ENCODE measurements at regions of chr14 and their contacts with region 1.

Region 1: GRCh38 chr14:51651388-51652167 is at the start of gene FRMD6:
- DNase-seq: peak; percentile 86
- ATAC-seq: peak; percentile 71
- H3K4me3 ChIP-seq: peak within 1 kb of the TSS; percentile 86
- H3K27ac ChIP-seq: peak within 1 kb of the TSS; percentile 83
- H3K4me1 ChIP-seq: peaks cover 48% of the 10 kb centered on the region
- H3K27me3 ChIP-seq: no peaks in the 10 kb centered on the region
- CTCF ChIP-seq: peak; percentile 86
- total RNA-seq, gene FRMD6: 88.3 and 103 TPM in 2 replicates

Region 2: DNA sequence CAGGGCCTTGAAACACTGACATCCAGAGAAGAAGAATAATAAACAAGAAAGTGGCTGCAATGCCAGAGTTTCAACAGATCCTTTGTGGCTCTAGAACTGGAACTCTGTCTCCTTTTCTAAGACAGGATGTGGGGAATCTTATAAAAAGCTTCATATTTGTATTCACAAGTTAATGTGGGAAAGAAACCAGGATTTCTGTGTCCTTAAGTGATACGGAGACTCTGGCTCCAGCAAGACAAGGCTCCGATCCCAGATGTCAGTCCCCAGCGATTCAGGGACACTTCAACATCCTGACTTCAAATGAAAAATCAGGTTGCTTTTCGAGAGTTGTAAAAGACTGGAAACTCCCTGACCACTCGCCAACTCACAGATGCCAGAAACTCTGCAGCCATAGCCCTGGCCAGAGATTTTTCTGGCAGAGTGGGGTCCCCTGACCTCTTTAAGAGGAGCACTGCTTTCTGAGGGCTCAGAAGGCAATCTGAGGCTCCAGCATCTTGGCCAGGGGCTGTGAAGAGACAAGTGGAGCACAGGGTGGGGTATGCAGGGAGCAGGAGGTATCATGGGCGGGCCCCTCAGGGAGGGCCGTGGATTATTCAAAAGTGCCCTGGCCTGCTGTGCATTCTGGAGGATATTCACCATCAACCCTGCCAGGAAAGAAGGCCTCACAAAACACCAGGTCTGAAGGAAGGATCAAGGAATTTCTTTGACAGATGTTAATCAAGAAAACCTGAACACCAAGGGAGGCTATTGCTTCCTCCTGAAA is 358.2 kb before region 1 on chr14:
- CTCF ChIA-PET with region 1: interaction called, 3 read pairs
- POLR2A ChIA-PET with region 1: interaction called, 13 read pairs
- intact Hi-C with region 1: no loop called
- DNase-seq: no peak
- ATAC-seq: no peak
- H3K4me3 ChIP-seq: no peak overlapping the region
- H3K27ac ChIP-seq: no peak overlapping the region
- H3K4me1 ChIP-seq: peaks cover 12% of the 10 kb centered on the region
- H3K27me3 ChIP-seq: no peaks in the 10 kb centered on the region
- CTCF ChIP-seq: no peak

Region 3: DNA sequence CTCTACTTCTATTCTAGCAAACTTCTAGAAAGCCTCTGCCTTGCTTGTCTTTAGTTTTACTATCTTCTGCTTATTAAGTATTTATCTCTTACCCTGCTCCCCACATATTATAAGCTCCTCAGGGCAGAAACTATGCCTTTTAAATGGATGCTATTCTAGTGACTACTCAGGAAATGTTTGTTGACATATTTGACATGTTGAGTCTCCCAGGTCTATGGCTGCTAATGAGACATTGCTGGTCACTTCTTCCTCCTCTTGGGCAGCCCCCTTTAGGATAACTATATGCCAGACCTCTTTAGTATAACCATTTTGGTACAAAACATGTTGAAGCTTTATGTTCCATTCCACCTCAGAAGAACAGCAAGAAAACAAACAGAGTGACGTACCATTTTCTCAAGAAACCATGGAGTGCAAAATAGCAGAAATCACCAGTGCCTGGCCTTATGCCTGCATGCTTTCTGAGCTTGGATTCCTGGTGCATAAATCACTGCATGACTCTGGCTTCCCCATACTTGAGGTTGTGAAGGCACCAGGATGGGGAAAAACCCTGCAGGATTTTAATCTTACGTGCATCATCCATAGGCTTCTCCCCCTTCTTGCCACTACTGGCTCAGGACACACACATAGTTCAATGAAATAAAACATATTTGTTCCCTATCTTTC is 208.9 kb before region 1 on chr14:
- CTCF ChIA-PET with region 1: interaction called, 3 read pairs
- POLR2A ChIA-PET with region 1: interaction called, 19 read pairs
- intact Hi-C with region 1: loop called (anchors 2 kb)
- DNase-seq: peak; percentile 97
- ATAC-seq: peak; percentile 91
- H3K4me3 ChIP-seq: peak overlapping the region; percentile 35
- H3K27ac ChIP-seq: peak overlapping the region; percentile 95
- H3K4me1 ChIP-seq: peaks cover 45% of the 10 kb centered on the region
- H3K27me3 ChIP-seq: no peaks in the 10 kb centered on the region
- CTCF ChIP-seq: no peak

Region 4: GRCh38 chr14:51539571-51540037 is 112.0 kb before region 1 on chr14:
- CTCF ChIA-PET with region 1: interaction called, 11 read pairs
- POLR2A ChIA-PET with region 1: interaction called, 10 read pairs
- intact Hi-C with region 1: loop called (anchors 1 kb)
- DNase-seq: peak; percentile 99
- ATAC-seq: peak; percentile 60
- H3K4me3 ChIP-seq: peak overlapping the region; percentile 22; the same call in 1 of the 2 replicates
- H3K27ac ChIP-seq: peak overlapping the region; percentile 96
- H3K4me1 ChIP-seq: peaks cover 50% of the 10 kb centered on the region
- H3K27me3 ChIP-seq: no peaks in the 10 kb centered on the region
- CTCF ChIP-seq: no peak

Region 5: GRCh38 chr14:51581017-51581881 is 70.3 kb before region 1 on chr14:
- CTCF ChIA-PET with region 1: no interaction called
- POLR2A ChIA-PET with region 1: no interaction called
- intact Hi-C with region 1: loop called (anchors 2 kb)
- DNase-seq: peak; percentile 92
- ATAC-seq: peak; percentile 84
- H3K4me3 ChIP-seq: peak overlapping the region; percentile 1; the same call in 1 of the 2 replicates
- H3K27ac ChIP-seq: peak overlapping the region; percentile 82
- H3K4me1 ChIP-seq: peaks cover 60% of the 10 kb centered on the region
- H3K27me3 ChIP-seq: no peaks in the 10 kb centered on the region
- CTCF ChIP-seq: no peak

Region 6: DNA sequence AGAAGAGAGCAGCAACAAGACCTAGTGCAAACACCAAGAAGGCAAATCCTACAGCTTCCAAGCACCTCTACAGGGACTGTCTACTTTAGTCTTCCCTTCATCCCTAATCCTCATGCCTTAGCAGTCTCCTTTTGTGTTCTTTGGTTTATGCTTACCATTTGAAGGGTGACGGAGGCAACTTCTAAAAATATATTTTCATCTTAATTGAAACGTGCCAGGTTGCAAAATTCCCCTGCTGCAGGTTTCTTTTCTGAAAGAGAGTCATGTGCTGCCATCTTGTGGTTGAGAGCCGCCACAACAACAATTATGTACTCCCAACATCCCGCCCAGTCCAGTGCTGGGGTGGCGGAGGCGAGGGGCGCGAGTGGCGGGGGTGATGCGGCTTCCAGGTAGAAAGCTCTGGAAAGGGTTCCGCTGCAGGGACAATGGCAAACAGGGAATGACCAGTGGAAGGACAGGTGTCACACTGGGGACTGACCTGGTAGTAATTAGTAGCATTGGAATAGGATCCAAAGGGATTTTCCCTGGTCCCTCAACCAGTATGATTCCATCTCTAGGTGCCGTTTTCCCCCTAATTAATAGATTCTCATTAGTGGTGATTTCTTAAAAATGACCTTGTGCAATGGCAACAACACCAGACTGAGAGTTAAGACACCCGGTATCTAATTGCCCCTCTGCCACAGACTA is 128.6 kb after region 1 on chr14:
- CTCF ChIA-PET with region 1: interaction called, 26 read pairs
- POLR2A ChIA-PET with region 1: interaction called, 6 read pairs
- intact Hi-C with region 1: loop called (anchors 1 kb)
- DNase-seq: peak; percentile 85
- ATAC-seq: peak; percentile 58
- H3K4me3 ChIP-seq: peak overlapping the region; percentile 41
- H3K27ac ChIP-seq: no peak overlapping the region
- H3K4me1 ChIP-seq: peaks cover 4% of the 10 kb centered on the region; the same call in 1 of the 2 replicates
- H3K27me3 ChIP-seq: no peaks in the 10 kb centered on the region
- CTCF ChIP-seq: peak; percentile 97

Measured in PC-3 (cell line).